Right cardiac atrium (tissue), 5 donors: ENCODE measurements at regions of chr6 and their contacts with region 1.

Region 1: DNA sequence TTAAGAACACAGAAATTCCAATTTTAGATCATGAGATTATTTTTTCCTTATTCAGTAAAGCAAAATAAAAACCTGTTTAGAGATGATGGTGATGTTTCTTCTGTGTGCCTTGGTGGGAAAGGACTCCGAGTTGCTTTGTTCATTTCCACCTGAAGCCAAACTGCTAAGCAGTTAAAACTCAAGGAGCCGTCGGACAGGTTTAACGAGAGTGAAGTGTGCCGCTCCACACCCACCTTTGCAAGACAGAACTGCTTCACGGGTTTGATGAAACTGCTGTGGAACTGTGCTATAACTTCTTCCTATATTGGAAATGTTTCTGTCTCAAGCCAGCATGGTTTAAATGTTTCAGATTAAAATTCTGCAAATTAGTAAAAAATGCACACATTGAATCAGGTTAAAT is 9.2 kb upstream of the DSP start:
- DNase-seq: no peak
- ATAC-seq: no peak
- H3K4me3 ChIP-seq: no peak overlapping the region
- H3K27ac ChIP-seq: no peak overlapping the region
- H3K4me1 ChIP-seq: no peaks in the 10 kb centered on the region
- H3K27me3 ChIP-seq: no peaks in the 10 kb centered on the region

Region 2: DNA sequence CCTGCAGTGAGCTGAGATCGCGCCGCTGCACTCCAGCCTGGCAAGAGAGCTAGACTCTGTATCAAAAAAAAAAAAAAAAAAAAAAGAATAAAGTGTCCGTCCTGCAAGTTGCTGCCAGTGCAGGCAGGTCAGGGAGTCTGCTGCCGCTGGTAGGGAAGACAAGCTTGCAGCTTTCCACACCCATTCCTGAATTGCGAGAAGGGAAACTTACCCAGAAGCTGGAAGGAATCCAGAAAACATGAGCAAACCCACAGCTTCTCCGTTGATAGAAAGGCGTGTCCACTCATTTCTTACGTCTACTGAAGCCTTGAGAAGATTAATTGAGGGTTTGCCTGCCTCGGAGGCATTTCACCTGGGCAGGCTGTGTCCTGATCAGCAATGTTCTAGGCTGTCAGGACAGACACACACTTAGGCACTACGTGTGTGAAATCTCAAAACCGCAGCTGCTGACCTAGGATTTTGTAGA is 52.4 kb before region 1 on chr6:
- intact Hi-C with region 1: loop called in 1 of 4 experiments (anchors 10 kb)
- DNase-seq: no peak
- ATAC-seq: peak; percentile 74 to 88
- H3K4me3 ChIP-seq: no peak overlapping the region
- H3K27ac ChIP-seq: no peak overlapping the region
- H3K4me1 ChIP-seq: no peaks in the 10 kb centered on the region
- H3K27me3 ChIP-seq: no peaks in the 10 kb centered on the region